Activated T-helper 2 cell treated with anti-CD3 and anti-CD28 coated beads, Interferon-gamma antibody, Interleukin-2, Interleukin-4, amounts not matched to agents 10 μg/mL and 5 μg/mL and 100 μg/mL, durations not matched to agents 14 hours and 24 hours and 36 hours (primary cell): ENCODE measurements at regions of chr13 and their contacts with region 1.

Region 1: DNA sequence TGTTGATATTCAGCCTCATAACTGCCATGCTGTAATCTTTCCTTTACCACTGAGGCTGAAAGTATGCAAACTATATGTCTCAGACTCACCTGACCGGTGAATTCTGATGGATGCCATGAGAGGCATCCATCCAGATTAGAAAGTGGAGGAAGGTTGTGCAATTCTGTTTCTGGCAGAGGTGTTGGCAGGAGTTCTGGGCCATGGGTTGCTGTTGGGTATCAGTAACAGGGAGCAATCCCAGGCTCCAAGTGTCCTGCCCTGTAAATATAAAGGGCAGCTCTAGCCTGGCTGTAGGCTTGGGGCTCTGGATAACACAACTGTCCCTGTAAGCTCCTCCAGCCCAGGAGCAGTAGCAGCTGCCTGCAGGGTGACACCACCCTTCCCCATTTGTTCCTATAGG is 77.4 kb upstream of the ABCC4 start:
- DNase-seq: no peak
- H3K4me3 Mint-ChIP-seq: no peak overlapping the region
- H3K27ac Mint-ChIP-seq: no peak overlapping the region
- H3K4me1 Mint-ChIP-seq: peaks cover 3% of the 10 kb centered on the region
- H3K27me3 Mint-ChIP-seq: peaks cover 6% of the 10 kb centered on the region

Region 2: GRCh38 chr13:95301183-95301967 is 77.2 kb before region 1 on chr13 and contains the start of gene ABCC4:
- intact Hi-C with region 1: loop called (anchors 5 kb)
- DNase-seq: peak; percentile 55
- H3K4me3 Mint-ChIP-seq: peak within 1 kb of the TSS; percentile 88
- H3K27ac Mint-ChIP-seq: peak within 1 kb of the TSS; percentile 76
- H3K4me1 Mint-ChIP-seq: peaks cover 27% of the 10 kb centered on the region
- H3K27me3 Mint-ChIP-seq: peaks cover 6% of the 10 kb centered on the region
- total RNA-seq, gene ABCC4: 19.3 and 19.6 TPM in 2 replicates

Region 3: DNA sequence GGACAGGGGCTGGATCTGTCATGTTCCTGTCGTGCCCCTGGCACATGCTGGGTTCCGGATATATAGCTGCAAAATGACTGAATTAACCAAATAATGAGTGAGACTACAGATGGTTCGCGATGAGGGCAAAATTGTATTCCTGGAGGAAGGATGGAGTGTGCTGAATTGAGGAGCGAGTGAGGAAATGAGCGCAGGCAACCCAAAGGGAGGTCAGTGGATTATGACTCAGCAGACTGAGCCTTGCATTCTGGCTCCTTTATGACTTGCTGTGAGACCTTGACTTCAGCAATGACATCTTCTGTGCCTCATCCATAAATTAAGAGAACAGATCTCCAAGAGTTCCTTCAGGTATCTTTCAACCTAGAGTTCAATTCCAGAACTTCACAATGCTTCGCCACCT is 59.0 kb after region 1 on chr13:
- intact Hi-C with region 1: no loop called
- DNase-seq: no peak
- H3K4me3 Mint-ChIP-seq: no peak overlapping the region
- H3K27ac Mint-ChIP-seq: no peak overlapping the region
- H3K4me1 Mint-ChIP-seq: no peaks in the 10 kb centered on the region
- H3K27me3 Mint-ChIP-seq: no peaks in the 10 kb centered on the region

Region 4: DNA sequence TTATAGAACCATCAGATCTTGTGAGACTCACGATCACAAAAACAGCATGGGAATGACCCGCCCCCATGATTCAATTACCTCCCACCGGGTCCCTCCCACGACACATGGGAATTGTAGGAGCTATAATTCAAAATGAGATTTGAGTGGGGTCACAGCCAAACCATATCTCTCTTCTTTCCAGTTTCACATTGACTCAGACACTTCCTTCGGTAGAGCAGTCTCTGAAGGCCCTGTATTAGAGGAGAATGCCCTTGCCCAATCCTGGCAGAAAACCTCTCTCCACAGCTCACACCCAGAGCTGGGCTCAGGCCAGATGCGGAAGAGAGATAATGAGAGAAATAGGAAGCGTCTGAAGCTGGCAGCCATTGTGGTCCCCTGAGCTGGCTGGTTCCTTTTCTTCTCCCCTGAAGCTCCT is 101.5 kb after region 1 on chr13:
- intact Hi-C with region 1: no loop called
- DNase-seq: no peak
- H3K4me3 Mint-ChIP-seq: no peak overlapping the region
- H3K27ac Mint-ChIP-seq: no peak overlapping the region
- H3K4me1 Mint-ChIP-seq: peaks cover 17% of the 10 kb centered on the region
- H3K27me3 Mint-ChIP-seq: peaks cover 6% of the 10 kb centered on the region

Region 5: GRCh38 chr13:95671597-95671996 is 293.0 kb after region 1 on chr13:
- intact Hi-C with region 1: no loop called
- DNase-seq: no peak
- H3K4me3 Mint-ChIP-seq: no peak overlapping the region
- H3K27ac Mint-ChIP-seq: no peak overlapping the region
- H3K4me1 Mint-ChIP-seq: peaks cover 24% of the 10 kb centered on the region
- H3K27me3 Mint-ChIP-seq: no peaks in the 10 kb centered on the region